A673 (cell line): ENCODE measurements at regions of chr5 and their contacts with region 1.

Region 1: DNA sequence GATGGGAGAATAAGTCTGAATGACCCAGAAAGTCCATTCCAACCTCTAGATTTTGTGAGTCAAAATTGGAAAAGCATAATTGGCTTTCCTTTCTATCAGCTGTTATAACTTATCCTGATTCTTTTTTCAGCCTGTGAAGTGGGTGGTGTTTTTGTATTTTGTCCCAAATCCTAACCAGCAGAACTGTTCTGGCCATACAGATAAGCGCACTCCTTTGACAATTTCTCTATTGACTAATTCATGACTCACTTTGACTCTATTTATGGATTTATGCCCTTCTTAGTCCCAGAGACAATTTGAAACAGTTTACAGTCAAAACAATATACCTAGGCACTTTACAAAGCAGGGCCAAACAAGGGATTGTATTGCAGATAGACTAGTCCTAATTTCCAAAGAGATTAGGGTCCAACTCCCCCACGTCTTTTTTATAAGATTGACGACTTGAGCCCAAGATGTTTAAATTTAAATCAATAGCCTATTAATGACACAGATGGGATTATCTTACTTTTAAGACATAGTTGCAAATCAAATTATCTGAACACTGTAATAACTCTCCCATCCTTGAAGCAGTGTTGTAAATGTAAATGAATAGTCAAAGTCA is 301.7 kb upstream of the SEMA6A start:
- DNase-seq: no peak
- H3K4me3 ChIP-seq: no peak overlapping the region
- H3K27ac ChIP-seq: no peak overlapping the region
- H3K4me1 ChIP-seq: no peaks in the 10 kb centered on the region
- H3K27me3 ChIP-seq: no peaks in the 10 kb centered on the region
- CTCF ChIP-seq: no peak

Region 2: DNA sequence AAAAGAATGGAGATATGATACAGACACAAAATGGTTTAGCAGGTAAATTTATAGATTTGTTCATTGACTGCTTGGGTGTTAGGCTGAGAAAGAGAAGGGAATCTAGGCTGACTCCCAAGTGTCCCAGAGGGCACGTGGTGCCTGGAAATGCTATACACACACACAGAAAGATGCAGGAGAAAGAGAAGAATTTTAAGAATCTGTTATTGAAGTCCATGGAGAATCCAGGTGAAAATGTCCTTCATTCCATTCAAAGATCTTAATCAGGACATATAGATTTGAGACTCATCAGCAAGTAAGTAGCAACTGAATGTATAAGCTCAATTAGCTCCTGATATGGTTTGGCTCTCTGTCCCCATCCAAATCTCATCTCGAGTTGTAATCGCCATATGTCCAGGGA is 104.7 kb after region 1 on chr5:
- CTCF ChIA-PET with region 1: interaction called, 11 read pairs
- POLR2A ChIA-PET with region 1: no interaction called
- intact Hi-C with region 1: no loop called
- DNase-seq: no peak
- H3K4me3 ChIP-seq: no peak overlapping the region
- H3K27ac ChIP-seq: no peak overlapping the region
- H3K4me1 ChIP-seq: no peaks in the 10 kb centered on the region
- H3K27me3 ChIP-seq: no peaks in the 10 kb centered on the region
- CTCF ChIP-seq: no peak

Region 3: GRCh38 chr5:117999939-118000549 is 1123.7 kb after region 1 on chr5:
- CTCF ChIA-PET with region 1: no interaction called
- POLR2A ChIA-PET with region 1: no interaction called
- intact Hi-C with region 1: no loop called
- DNase-seq: no peak
- H3K4me3 ChIP-seq: no peak overlapping the region
- H3K27ac ChIP-seq: no peak overlapping the region
- H3K4me1 ChIP-seq: no peaks in the 10 kb centered on the region
- H3K27me3 ChIP-seq: no peaks in the 10 kb centered on the region
- CTCF ChIP-seq: no peak